ENCODE measurements at regions of chr21 and their contacts with region 1.

Region 1: GRCh38 chr21:41678944-41679343 is 87.9 kb downstream of the RIPK4 start:
- DNase-seq: peak; percentile 96 to 100
- H3K4me3 ChIP-seq: peak overlapping the region; percentile 73
- H3K27ac ChIP-seq: peak overlapping the region; percentile 99
- H3K4me1 ChIP-seq: peaks cover 56% of the 10 kb centered on the region
- H3K27me3 ChIP-seq: no peaks in the 10 kb centered on the region
- CTCF ChIP-seq: no peak

Region 2: GRCh38 chr21:41630249-41630648 is 48.7 kb before region 1 on chr21:
- CTCF ChIA-PET with region 1: interaction called, 6 read pairs
- POLR2A ChIA-PET with region 1: interaction called, 17 read pairs
- intact Hi-C with region 1: loop called (anchors 1 kb)
- DNase-seq: peak; percentile 87 to 100
- H3K4me3 ChIP-seq: no peak overlapping the region
- H3K27ac ChIP-seq: peak overlapping the region; percentile 94
- H3K4me1 ChIP-seq: peaks cover 50% of the 10 kb centered on the region
- H3K27me3 ChIP-seq: no peaks in the 10 kb centered on the region
- CTCF ChIP-seq: no peak

Region 3: GRCh38 chr21:41663801-41664788 is 14.8 kb before region 1 on chr21:
- CTCF ChIA-PET with region 1: interaction called, 4 read pairs
- POLR2A ChIA-PET with region 1: interaction called, 12 read pairs
- intact Hi-C with region 1: loop called (anchors 2 kb)
- DNase-seq: peak in 1 of 2 experiments; percentile 76
- H3K4me3 ChIP-seq: no peak overlapping the region
- H3K27ac ChIP-seq: peak overlapping the region; percentile 68
- H3K4me1 ChIP-seq: peaks cover 59% of the 10 kb centered on the region
- H3K27me3 ChIP-seq: no peaks in the 10 kb centered on the region
- CTCF ChIP-seq: no peak

Region 4: GRCh38 chr21:41715649-41716281 is 36.8 kb after region 1 on chr21:
- CTCF ChIA-PET with region 1: no interaction called
- POLR2A ChIA-PET with region 1: interaction called, 22 read pairs
- intact Hi-C with region 1: loop called (anchors 1 kb)
- DNase-seq: peak; percentile 95 to 98
- H3K4me3 ChIP-seq: no peak overlapping the region
- H3K27ac ChIP-seq: peak overlapping the region; percentile 93
- H3K4me1 ChIP-seq: peaks cover 49% of the 10 kb centered on the region
- H3K27me3 ChIP-seq: no peaks in the 10 kb centered on the region
- CTCF ChIP-seq: no peak

Region 5: GRCh38 chr21:41761211-41762181 is 82.6 kb after region 1 on chr21:
- CTCF ChIA-PET with region 1: no interaction called
- POLR2A ChIA-PET with region 1: interaction called, 7 read pairs
- intact Hi-C with region 1: loop called (anchors 1 kb)
- DNase-seq: peak; percentile 87 to 91
- H3K4me3 ChIP-seq: peak overlapping the region; percentile 100
- H3K27ac ChIP-seq: peak overlapping the region; percentile 99
- H3K4me1 ChIP-seq: peaks cover 44% of the 10 kb centered on the region
- H3K27me3 ChIP-seq: no peaks in the 10 kb centered on the region
- CTCF ChIP-seq: no peak

Region 6: DNA sequence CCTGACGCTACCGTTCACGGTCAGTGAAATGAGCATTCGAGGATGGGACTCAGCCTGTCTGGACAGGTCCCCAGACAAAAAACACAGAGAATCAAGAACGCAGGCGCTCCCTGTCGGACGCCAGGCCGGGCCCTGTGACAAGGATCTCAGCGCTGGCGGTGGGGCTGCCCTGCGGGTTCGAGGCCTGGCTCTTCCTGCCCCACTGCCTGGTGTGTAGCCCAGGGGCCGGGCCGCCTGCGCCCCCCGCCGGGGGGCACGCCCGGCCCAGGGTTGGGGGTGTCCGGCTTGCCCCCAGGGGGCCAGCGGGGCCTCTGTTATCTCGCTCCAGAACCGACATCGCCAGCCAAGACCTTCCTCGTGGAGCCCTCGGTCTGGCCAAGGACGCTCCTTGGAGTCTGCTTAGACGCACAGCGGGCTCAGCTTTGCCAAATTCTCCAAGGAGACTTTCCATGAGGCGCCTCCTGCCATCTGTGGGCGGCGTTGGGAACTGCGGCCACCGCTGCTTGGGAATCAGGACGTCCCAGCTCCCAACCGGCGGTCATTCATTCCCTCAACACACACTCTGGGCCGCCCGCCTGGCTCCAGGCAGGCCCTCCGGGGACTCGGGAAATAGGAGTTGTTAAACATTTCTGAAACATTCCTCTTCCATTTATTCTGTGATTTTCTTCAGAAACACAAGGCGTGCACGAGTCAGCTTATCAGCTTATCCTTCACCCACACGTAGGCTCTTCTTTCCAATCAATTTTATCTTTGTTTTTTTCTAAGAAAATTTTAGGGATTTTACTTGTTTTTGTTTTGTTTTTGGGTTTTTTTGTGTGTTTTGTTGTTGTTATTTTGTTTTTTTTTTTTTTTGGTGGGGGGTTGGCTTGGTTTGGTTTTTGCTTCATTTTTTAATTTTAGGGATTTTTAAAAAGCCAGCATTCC is 99.3 kb after region 1 on chr21:
- CTCF ChIA-PET with region 1: interaction called, 3 read pairs
- POLR2A ChIA-PET with region 1: interaction called, 8 read pairs
- intact Hi-C with region 1: loop called (anchors 1 kb)
- DNase-seq: peak; percentile 62 to 81
- H3K4me3 ChIP-seq: no peak overlapping the region
- H3K27ac ChIP-seq: peak overlapping the region; percentile 13; the same call in 1 of the 2 replicates
- H3K4me1 ChIP-seq: peaks cover 42% of the 10 kb centered on the region
- H3K27me3 ChIP-seq: no peaks in the 10 kb centered on the region
- CTCF ChIP-seq: peak; percentile 75

Region 7: DNA sequence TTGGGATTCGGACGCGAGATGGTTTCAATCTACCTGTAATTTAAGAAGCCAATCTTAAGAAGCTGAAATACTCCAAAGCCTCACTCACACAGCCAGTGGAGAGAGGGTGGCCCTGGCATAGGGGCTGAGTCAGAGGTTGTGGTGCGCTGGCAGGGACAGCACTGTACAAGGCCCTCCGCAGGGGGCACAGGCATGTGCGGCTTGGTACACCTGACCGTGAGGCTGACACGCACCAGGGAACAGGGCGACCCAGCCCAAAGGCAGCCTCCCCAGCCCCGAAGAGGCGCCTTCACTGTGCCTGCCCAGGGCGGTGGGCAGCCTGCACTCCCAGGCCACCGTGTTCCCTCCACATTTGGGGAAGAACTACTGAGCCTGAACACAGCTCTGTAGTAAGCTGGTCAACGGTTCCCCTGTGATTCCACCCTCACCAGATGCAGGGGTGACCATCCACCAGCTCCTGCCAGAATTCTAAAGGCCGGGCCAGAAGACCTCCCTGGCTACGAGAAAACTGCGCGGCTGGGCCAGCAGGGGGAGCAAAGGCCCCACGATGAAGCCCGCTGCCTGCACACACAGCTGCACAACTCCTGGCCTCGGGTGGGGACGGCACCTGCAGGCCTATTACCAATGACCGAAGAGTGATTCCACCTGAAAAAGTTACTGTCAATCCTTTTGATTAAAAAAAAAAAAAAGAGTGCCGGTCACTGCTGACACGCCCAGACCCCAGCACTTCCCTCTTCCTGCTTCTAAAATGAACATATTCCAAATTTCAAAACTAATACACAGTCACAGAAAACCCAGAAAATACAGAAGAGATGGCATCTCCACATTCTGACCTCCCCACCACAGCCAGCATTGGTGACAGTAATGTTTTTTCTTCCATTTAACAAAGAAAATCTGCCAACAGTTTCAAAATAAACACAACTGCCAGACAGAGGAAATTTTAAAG is 137.5 kb after region 1 on chr21:
- CTCF ChIA-PET with region 1: no interaction called
- POLR2A ChIA-PET with region 1: no interaction called
- intact Hi-C with region 1: loop called (anchors 1 kb)
- DNase-seq: peak in 1 of 2 experiments; percentile 19
- H3K4me3 ChIP-seq: no peak overlapping the region
- H3K27ac ChIP-seq: peak overlapping the region; percentile 65
- H3K4me1 ChIP-seq: peaks cover 9% of the 10 kb centered on the region
- H3K27me3 ChIP-seq: no peaks in the 10 kb centered on the region
- CTCF ChIP-seq: no peak